ENCODE measurements at regions of chr10 and their contacts with region 1.

Region 1: GRCh38 chr10:35136263-35136815 is 9.7 kb downstream of the CREM start:
- DNase-seq: no peak
- ATAC-seq: no peak
- H3K4me3 Mint-ChIP-seq: no peak overlapping the region
- H3K27ac Mint-ChIP-seq: peak overlapping the region; percentile 87
- H3K4me1 Mint-ChIP-seq: peaks cover 42% of the 10 kb centered on the region
- H3K27me3 Mint-ChIP-seq: no peaks in the 10 kb centered on the region
- CTCF ChIP-seq: no peak

Region 2: DNA sequence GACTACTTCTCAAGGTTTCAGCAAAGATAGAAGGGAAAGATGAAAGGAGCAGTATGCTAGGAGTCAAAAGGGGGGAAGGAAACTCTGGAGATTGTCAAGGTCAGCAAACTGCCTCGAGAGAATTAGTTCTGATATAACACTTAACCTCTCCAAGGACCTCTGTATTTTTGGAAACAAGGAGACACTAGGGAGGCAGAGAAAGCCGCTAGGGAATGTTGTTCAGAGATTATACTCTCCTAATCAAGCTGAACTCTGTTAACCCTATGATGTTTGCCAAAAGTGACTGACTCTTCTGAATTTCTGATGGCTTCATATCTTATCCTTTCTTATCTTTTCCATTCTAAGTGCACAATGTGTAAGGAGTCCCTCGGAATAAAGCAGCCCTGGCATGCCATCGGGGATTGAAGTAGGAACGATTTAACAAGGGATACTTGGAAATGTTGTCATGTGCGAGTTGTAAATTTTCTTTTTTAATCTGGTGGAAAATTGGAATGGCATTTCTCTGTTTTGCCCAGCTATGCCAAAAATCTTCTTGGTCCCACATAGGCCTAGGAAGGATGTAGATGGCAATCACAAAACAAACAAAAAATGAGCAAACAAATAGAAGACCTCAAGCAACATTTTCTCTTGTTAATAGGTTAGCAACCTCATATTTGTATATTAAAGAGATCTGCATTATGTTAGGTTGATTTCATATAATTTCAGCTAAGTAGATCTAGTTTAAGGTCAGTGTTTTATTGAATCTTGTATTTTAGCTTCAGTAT is 17.6 kb after region 1 on chr10:
- CTCF ChIA-PET with region 1: interaction called, 10 read pairs
- POLR2A ChIA-PET with region 1: interaction called, 11 read pairs
- intact Hi-C with region 1: loop called (anchors 1 kb)
- DNase-seq: no peak
- ATAC-seq: no peak
- H3K4me3 Mint-ChIP-seq: no peak overlapping the region
- H3K27ac Mint-ChIP-seq: no peak overlapping the region
- H3K4me1 Mint-ChIP-seq: peaks cover 39% of the 10 kb centered on the region
- H3K27me3 Mint-ChIP-seq: no peaks in the 10 kb centered on the region
- CTCF ChIP-seq: no peak

Measured in activated CD8-positive, alpha-beta T cell treated with anti-CD3 and anti-CD28 coated beads for 36 hours (primary cell).